Prostate gland (tissue), 2 donors: ENCODE measurements at regions of chr6 and their contacts with region 1.

Region 1: DNA sequence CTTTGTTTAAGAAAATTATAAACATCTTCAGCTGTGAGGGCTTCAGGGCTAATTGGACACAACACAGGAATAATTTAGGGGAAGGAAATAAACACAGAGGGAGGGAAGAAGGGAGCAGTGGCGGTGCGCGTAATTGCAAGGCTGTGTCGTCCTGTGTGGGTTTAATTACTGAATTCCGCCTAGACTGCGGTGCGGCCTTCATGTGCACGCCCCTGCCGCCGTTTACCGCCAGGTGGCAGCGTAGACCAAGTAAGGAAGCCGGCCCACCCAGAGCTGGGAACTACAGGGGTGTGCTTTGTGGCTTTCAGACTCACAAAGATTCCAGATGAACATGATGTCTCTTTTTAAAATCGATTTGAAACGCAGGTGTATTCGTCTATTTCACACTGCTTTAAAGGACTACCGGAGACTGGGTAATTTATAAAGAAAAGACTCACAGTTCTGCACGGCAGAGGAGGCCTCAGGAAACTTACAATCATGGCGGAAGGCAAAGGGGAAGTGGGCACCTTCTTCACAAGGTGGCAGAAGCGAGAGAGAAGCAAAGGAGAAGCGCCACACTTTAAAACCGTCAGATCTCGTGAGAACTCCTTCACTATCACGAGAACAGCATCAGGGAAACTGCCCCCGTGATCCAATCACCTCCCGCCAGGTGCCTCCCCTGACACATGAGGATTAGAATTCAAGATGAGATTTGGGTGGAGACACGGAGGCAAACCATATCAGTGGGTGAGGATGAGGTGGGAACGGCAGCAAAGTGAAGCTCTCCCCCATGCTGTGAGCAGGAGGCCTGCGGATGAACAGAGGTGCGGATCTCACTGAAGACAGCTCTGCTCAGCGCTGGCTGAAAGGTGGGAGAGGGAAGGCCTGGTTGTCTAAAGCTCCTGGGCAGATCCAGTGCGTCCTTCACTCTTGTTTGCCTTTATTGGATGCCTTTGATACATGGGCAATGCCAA is 222.0 kb upstream of the PDE10A start:
- DNase-seq: peak; percentile 33
- H3K4me3 ChIP-seq: no peak overlapping the region
- H3K27ac ChIP-seq: no peak overlapping the region
- H3K4me1 ChIP-seq: no peaks in the 10 kb centered on the region
- H3K27me3 ChIP-seq: no peaks in the 10 kb centered on the region
- CTCF ChIP-seq: peak; percentile 65 to 90 (median 73)
- POLR2A ChIP-seq: no peak

Region 2: DNA sequence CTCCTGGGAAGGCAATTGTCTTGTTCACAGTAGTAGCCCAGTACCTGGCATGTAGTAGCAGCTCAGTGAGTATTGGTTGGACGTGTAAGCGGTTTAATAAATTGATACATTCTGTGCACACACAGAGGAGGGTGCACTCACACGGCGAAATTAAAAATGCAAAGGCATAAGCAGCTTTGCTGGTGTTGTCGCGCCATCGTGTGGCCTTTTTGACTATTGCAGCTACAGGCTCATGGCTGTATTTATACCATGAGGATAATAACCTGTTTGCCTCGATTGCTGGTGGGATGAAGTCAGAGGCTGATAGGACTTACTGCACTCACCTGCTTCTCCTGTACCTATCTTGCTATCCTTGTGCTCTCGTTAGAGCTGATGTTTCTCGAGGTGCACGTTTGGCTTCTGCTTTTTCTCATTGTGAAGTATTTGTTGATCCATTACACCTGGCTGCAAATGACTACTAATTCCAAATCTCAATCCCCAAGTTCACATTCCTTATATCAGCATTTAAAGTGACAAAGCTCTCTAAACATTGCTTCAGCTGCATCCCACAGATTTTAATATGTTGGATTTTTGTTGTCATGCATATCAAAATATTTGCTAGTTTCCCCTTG is 221.1 kb after region 1 on chr6:
- intact Hi-C with region 1: loop called (anchors 2 kb)
- DNase-seq: peak; percentile 40
- H3K4me3 ChIP-seq: no peak overlapping the region
- H3K27ac ChIP-seq: no peak overlapping the region
- H3K4me1 ChIP-seq: no peaks in the 10 kb centered on the region
- H3K27me3 ChIP-seq: no peaks in the 10 kb centered on the region
- CTCF ChIP-seq: peak; percentile 57 to 80 (median 71)
- POLR2A ChIP-seq: no peak

Region 3: DNA sequence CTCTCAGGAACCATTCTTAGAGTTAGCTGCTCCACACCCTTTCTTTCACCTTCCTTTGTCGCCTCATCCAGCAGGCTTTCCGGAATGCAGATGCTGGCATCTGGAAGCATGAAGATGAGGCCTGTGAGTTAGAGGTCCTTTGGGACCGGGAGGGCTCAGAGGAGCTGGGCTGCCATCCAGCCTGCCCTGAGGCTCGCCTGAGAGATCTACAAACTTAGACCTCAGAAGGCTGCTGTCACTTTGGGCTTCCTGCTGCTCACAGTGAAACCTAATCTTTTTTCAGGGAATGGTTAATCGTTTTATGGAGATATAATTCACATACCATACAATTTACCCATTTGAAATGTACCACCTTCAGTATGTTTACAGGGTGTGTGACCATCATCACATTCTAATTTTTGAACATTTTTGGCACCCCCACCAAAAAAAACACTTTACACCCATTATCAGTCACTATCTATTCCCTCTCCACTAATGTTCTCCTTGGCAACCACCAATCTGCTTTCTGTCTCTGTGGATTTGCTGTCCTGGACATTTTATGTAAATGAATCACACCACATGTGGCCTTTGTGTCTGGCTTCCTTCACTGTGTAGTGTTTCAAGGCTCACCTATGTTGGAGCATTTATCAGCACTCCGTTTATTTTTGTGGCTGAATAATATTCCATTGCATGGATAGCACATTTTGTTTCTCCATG is 517.6 kb after region 1 on chr6:
- intact Hi-C with region 1: loop called (anchors 5 kb)
- DNase-seq: no peak
- H3K4me3 ChIP-seq: no peak overlapping the region
- H3K27ac ChIP-seq: no peak overlapping the region
- H3K4me1 ChIP-seq: no peaks in the 10 kb centered on the region
- H3K27me3 ChIP-seq: no peaks in the 10 kb centered on the region
- CTCF ChIP-seq: no peak
- POLR2A ChIP-seq: no peak

Region 4: DNA sequence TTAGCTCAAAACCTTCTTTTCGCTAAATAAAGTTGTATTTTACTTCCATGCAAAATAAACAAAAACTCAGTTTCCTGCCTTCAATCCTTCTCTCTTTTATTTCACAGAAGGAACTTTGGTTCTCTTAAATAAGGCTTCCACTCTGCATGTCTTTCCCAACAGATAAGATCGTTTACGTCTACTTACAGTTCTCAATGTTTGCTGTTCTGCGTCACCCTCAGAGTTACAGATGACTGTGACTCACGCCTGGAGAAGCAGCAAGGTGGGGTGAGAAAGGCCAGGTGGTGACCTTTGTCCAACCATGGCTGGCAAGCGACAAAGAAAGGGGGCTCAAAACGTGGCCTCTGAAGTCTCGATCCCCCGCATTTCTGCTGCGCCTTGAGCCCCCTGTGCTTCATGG is 793.3 kb after region 1 on chr6:
- intact Hi-C with region 1: no loop called
- DNase-seq: no peak
- H3K4me3 ChIP-seq: no peak overlapping the region
- H3K27ac ChIP-seq: no peak overlapping the region
- H3K4me1 ChIP-seq: no peaks in the 10 kb centered on the region
- H3K27me3 ChIP-seq: no peaks in the 10 kb centered on the region
- CTCF ChIP-seq: no peak
- POLR2A ChIP-seq: no peak